Lower lobe of right lung (tissue), 2 donors: ENCODE measurements at regions of chr4 and their contacts with region 1.

Region 1: GRCh38 chr4:89226665-89227574 is 80.7 kb downstream of the GPRIN3 start:
- DNase-seq: peak; percentile 67
- ATAC-seq: peak; percentile 94 to 97
- H3K4me3 ChIP-seq: no peak overlapping the region
- H3K27ac ChIP-seq: no peak overlapping the region
- H3K4me1 ChIP-seq: no peaks in the 10 kb centered on the region
- H3K27me3 ChIP-seq: no peaks in the 10 kb centered on the region
- CTCF ChIP-seq: peak; percentile 78

Region 2: DNA sequence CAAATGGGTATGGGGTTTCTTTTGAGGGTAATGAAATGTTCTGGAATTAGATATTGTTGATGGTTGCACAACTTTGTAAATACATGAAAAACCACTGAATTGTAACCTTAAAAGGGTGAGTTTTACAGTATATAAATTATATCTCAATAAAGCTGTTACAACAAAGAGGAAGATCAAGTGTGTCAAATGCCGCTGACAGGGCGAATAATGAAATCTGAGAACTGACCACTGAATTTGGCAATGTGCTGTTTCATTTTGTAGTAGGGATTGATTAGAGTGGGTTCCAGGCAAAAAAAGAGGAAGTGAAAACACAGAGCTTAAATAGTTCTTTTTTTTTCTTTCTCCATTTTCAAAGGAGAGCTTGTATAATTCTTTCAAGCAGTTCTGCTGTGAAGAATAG is 368.2 kb before region 1 on chr4:
- intact Hi-C with region 1: no loop called
- DNase-seq: no peak
- ATAC-seq: peak; percentile 66 to 79
- H3K4me3 ChIP-seq: no peak overlapping the region
- H3K27ac ChIP-seq: peak overlapping the region; percentile 54
- H3K4me1 ChIP-seq: peaks cover 10% of the 10 kb centered on the region
- H3K27me3 ChIP-seq: no peaks in the 10 kb centered on the region
- CTCF ChIP-seq: no peak

Region 3: DNA sequence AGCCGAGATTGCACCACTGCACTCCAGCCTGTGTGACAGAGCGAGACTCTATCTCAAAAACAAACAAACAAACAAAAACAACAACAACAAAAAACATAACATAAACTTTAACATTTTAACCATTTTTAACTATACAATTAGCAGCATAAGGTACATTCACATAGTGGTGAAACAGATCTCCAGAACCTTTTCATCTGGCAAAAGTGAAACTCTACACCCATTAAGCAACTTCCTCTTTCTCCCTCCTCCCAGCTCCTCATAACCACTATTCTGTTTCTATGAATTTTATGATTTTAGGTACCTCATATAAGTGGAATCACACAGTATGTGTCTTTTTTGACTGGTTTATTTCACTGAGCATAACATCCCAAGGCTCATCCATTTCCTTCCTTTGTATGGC is 273.5 kb before region 1 on chr4:
- intact Hi-C with region 1: no loop called
- DNase-seq: no peak
- ATAC-seq: peak; percentile 27 to 48
- H3K4me3 ChIP-seq: no peak overlapping the region
- H3K27ac ChIP-seq: no peak overlapping the region
- H3K4me1 ChIP-seq: peaks cover 18% of the 10 kb centered on the region
- H3K27me3 ChIP-seq: no peaks in the 10 kb centered on the region
- CTCF ChIP-seq: no peak

Region 4: DNA sequence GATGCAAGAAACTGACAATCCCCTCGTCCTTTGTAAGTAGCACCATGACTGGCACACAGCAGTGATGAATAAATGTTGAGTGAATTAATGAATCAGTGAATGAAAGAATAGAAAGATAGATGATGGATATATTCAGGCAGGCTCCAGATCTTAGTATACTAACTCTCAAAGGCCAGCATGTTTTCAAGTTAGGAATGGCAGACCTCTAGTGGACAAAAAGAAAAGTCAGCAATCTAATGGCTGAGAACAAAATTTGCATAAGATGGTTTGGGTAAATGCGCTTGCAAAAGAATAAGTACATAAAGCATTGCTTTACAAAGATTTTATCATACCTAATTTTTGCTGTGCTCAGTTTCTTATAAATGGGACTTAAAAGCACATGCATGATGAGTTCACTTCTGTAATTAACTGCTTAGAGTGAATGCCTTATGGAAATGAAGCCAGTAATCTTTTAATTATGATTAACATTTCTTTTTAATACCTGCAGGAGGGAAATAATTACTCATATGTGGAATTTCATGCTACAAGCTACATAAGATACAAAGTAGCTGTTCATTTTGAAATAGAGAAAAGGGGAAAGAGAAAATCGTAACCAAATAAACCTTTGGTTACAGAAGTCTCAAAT is 207.6 kb after region 1 on chr4:
- intact Hi-C with region 1: loop called (anchors 10 kb)
- DNase-seq: no peak
- ATAC-seq: peak in 1 of 2 donors; percentile 67
- H3K4me3 ChIP-seq: no peak overlapping the region
- H3K27ac ChIP-seq: no peak overlapping the region
- H3K4me1 ChIP-seq: no peaks in the 10 kb centered on the region
- H3K27me3 ChIP-seq: no peaks in the 10 kb centered on the region
- CTCF ChIP-seq: peak; percentile 63